PC-9 (cell line): ENCODE measurements at regions of chr3 and their contacts with region 1.

Region 1: GRCh38 chr3:171772427-171773056 is 37.7 kb downstream of the PLD1 start:
- DNase-seq: peak; percentile 62 to 64
- H3K4me3 ChIP-seq: no peak overlapping the region
- H3K27ac ChIP-seq: no peak overlapping the region
- H3K4me1 ChIP-seq: peaks cover 8% of the 10 kb centered on the region; the same call in 1 of the 2 replicates
- H3K27me3 ChIP-seq: no peaks in the 10 kb centered on the region
- CTCF ChIP-seq: peak; percentile 89

Region 2: DNA sequence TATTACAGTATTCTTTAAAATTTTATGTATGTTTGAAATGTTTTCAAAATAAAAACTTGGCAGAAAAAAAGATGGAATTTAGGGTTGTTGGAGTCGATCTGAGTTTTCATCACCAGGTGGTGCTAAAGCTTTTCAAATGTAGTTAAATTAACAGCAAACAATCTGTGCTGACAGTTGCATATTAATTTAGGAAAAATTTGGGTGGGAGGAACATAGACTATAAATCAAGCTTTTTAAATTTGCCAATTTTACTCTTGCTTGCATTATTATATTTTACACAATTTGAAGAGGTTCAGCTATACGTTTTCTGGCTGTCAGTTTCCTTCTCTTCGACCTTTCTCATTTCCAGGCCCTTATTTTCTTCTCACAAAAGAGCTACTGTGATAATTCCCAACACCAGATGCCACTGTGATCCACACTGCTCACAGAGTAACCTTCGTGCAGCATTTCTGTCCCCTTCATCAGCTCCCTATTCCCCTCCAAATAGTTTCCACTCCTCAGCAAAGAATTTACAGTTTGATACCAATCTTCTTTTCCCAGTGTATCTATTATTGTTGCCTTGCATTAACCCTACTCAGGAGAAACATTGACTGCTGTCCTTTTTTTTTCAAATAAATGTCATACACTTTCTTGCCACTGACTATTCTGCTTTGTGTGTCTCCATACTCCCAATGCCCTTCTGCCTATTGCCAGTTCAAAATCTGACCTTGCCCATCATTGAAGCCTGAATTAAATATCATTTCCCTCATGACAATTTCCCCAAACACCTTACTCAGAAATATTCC is 810.7 kb before region 1 on chr3:
- CTCF ChIA-PET with region 1: interaction called, 21 read pairs
- POLR2A ChIA-PET with region 1: interaction called, 3 read pairs
- intact Hi-C with region 1: loop called (anchors 1 kb)
- DNase-seq: peak; percentile 30 to 72
- H3K4me3 ChIP-seq: no peak overlapping the region; the same call in 1 of the 2 replicates
- H3K27ac ChIP-seq: peak overlapping the region; percentile 10
- H3K4me1 ChIP-seq: peaks cover 10% of the 10 kb centered on the region
- H3K27me3 ChIP-seq: no peaks in the 10 kb centered on the region
- CTCF ChIP-seq: peak; percentile 98

Region 3: DNA sequence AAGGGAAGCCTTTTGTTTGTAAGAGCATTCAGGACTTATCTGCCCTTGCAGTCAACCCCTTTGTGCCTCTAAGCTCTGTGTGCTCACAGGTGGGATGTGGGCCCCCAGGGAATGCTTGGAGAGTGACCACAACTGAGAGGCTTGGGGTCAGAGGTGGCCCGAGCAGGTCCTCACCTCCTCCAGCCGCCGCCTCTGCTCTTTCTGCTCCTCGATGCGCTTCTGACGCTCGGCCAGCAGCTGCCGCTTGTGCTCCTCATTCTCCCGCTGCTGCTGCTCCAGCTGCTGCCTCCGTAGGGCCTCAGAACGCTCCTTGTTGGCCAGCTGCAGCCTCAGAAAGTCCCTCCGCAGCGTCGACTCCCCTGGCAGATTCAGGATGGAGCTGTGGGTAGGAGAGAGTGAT is 615.3 kb before region 1 on chr3:
- CTCF ChIA-PET with region 1: no interaction called
- POLR2A ChIA-PET with region 1: no interaction called
- intact Hi-C with region 1: loop called (anchors 2 kb)
- DNase-seq: peak in 1 of 2 experiments; percentile 77
- H3K4me3 ChIP-seq: peak overlapping the region; percentile 17; the same call in 1 of the 2 replicates
- H3K27ac ChIP-seq: peak overlapping the region; percentile 93
- H3K4me1 ChIP-seq: peaks cover 53% of the 10 kb centered on the region
- H3K27me3 ChIP-seq: no peaks in the 10 kb centered on the region
- CTCF ChIP-seq: peak; percentile 43; the same call in 1 of the 2 replicates

Region 4: GRCh38 chr3:171430530-171430929 is 342.0 kb before region 1 on chr3:
- CTCF ChIA-PET with region 1: no interaction called
- POLR2A ChIA-PET with region 1: interaction called, 15 read pairs
- intact Hi-C with region 1: no loop called
- DNase-seq: no peak
- H3K4me3 ChIP-seq: no peak overlapping the region
- H3K27ac ChIP-seq: no peak overlapping the region
- H3K4me1 ChIP-seq: no peaks in the 10 kb centered on the region
- H3K27me3 ChIP-seq: no peaks in the 10 kb centered on the region
- CTCF ChIP-seq: no peak

Region 5: DNA sequence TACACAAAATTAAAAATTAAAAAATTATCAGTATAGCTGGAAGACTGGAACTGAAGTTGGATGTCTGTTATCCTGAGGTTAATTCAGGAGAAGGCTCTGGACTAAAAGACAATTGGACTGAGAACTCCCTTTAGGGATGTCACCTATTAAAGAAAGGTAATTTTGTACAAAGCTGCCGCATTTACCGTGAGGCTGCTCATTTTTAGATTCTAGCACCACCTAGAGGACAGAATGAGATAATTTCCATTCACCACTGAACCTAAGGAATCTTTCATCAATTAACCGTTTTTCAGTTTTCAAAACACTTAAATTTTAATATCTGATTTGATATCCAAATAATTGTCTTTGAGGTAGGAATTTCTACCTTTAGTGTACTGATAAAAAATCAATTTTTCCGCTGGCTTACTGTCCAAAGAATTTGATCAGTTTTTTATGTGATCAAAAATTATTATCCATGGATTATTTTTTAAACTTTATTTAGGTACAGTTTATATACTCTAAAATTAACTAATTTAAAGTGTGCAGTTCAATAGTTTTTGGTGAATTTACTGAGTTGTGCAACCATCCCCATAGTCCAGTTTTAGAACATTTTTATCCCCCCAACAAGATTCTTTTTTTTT is 205.6 kb before region 1 on chr3:
- CTCF ChIA-PET with region 1: interaction called, 8 read pairs
- POLR2A ChIA-PET with region 1: no interaction called
- intact Hi-C with region 1: loop called (anchors 1 kb)
- DNase-seq: peak in 1 of 2 experiments; percentile 45
- H3K4me3 ChIP-seq: no peak overlapping the region
- H3K27ac ChIP-seq: no peak overlapping the region
- H3K4me1 ChIP-seq: peaks cover 30% of the 10 kb centered on the region
- H3K27me3 ChIP-seq: no peaks in the 10 kb centered on the region
- CTCF ChIP-seq: peak; percentile 96

Region 6: DNA sequence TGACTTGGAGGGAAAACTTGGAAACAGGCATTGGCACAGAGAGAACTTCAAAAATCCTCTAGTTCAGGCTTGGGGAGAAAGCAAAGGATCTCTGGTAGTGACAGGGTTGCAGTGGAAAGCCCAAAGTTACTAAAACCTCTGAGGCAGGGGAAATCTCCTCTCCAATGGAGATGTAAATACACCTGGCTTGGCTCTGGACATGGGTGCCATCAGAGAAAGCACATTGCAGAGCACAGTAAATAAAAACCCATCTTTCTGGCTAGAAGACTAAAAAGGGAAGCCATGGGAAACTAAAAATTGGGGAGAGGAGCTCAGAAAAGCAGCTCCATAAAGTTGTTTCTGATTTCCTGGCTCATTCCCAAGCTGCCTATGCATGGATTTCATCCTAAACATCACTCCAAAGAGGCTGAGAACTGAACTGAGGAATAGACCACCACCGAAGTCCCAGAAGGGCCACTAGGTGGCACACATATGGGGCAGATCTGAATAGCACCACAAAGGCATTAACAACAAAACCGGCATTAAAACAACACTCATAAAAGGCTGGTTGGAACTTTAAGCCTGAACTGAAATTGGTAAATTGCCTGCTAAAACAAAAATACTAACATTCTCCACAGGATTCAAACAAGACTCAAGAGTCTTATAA is 68.7 kb before region 1 on chr3:
- CTCF ChIA-PET with region 1: interaction called, 11 read pairs
- POLR2A ChIA-PET with region 1: no interaction called
- intact Hi-C with region 1: loop called (anchors 5 kb)
- DNase-seq: peak in 1 of 2 experiments; percentile 29
- H3K4me3 ChIP-seq: no peak overlapping the region
- H3K27ac ChIP-seq: no peak overlapping the region
- H3K4me1 ChIP-seq: no peaks in the 10 kb centered on the region
- H3K27me3 ChIP-seq: no peaks in the 10 kb centered on the region
- CTCF ChIP-seq: peak; percentile 82

Region 7: DNA sequence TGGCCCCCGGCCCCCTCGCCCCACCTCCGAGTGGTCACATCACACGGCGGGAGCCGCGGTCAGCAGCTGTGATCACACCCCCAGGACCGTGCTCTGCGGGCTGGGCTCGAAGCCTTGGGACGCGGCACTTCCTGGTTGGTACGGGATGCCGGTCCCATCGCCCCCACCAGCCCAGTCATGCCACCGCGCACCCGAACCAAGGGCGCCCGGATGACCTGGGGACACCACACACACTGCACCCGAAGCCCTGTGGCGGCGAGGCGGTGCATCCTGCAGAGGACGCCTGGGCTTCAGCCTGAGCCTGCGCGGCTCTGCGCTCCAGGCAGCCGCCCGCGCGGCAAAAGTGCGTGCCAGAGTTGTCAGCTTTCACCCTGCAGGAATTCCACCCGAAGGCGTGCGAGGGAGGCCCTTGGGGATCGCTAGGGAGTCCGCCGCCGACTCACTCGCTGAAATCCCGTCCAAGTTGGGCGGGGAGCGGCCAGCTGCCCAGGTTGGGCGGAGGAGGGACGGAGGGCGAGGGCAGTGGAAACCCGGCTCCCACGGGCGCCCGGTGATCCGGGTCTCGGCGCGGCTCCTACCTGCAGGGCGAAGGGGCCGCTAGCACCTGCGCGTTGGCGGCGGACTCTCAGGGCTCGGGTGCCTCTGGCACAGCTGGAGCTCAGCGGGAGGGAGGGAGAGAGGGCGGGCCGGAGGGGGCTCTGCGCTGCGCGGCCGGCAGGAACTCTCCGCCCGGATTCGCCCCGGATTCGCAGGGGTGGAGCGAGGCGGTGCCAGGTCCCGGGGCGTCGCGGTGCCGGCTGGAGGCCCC is 37.5 kb after region 1 on chr3 and contains the start of gene PLD1:
- CTCF ChIA-PET with region 1: interaction called, 4 read pairs
- POLR2A ChIA-PET with region 1: interaction called, 5 read pairs
- intact Hi-C with region 1: loop called (anchors 5 kb)
- DNase-seq: peak; percentile 86 to 95
- H3K4me3 ChIP-seq: peak within 1 kb of the TSS; percentile 61
- H3K27ac ChIP-seq: peak within 1 kb of the TSS; percentile 98
- H3K4me1 ChIP-seq: peaks cover 75% of the 10 kb centered on the region
- H3K27me3 ChIP-seq: no peaks in the 10 kb centered on the region
- CTCF ChIP-seq: no peak
- total RNA-seq, gene PLD1: 32.5 and 33.3 TPM in 2 replicates

Region 8: DNA sequence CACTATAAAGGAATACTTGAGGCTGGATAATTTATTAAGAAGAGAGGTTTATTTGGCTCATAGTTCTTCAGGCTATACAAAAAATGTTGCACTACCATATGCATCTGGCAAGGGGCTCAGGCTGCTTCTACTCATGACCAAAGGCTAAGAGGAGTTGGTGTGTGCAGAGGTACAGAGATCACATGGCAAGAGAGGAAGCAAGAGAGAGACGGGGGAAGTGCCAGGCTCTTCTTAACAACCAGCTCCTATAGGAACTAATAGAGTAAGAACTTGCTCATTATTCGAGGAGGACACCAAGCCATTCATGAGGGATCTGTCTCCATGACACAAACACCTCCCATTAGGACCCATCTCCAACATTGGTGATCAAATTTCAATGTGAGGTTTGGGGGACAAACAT is 260.9 kb after region 1 on chr3:
- CTCF ChIA-PET with region 1: no interaction called
- POLR2A ChIA-PET with region 1: no interaction called
- intact Hi-C with region 1: no loop called
- DNase-seq: peak in 1 of 2 experiments; percentile 25
- H3K4me3 ChIP-seq: no peak overlapping the region
- H3K27ac ChIP-seq: no peak overlapping the region
- H3K4me1 ChIP-seq: peaks cover 21% of the 10 kb centered on the region
- H3K27me3 ChIP-seq: no peaks in the 10 kb centered on the region
- CTCF ChIP-seq: no peak

Region 9: DNA sequence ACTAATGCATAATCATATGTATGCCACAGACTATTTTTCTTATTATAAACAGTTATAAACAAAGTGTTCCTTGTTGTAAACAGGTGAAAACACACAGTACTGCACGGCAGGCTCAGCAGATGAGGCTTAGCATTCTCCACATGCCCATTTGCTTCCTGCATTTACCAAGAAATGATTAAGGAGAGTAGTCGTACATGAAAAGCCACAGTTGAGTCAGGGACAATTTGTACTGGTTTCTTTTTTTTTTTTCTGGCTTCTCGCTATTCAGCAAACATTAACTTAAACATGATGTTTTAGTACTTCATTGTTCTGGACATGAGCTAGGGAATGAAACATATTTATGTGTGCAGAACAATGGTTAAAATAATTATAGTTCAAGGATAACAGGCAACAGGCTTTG is 612.3 kb after region 1 on chr3:
- CTCF ChIA-PET with region 1: no interaction called
- POLR2A ChIA-PET with region 1: no interaction called
- intact Hi-C with region 1: no loop called
- DNase-seq: no peak
- H3K4me3 ChIP-seq: no peak overlapping the region
- H3K27ac ChIP-seq: no peak overlapping the region
- H3K4me1 ChIP-seq: no peaks in the 10 kb centered on the region
- H3K27me3 ChIP-seq: no peaks in the 10 kb centered on the region
- CTCF ChIP-seq: no peak